ENCODE measurements at regions of chr13 and their contacts with region 1.

Region 1: DNA sequence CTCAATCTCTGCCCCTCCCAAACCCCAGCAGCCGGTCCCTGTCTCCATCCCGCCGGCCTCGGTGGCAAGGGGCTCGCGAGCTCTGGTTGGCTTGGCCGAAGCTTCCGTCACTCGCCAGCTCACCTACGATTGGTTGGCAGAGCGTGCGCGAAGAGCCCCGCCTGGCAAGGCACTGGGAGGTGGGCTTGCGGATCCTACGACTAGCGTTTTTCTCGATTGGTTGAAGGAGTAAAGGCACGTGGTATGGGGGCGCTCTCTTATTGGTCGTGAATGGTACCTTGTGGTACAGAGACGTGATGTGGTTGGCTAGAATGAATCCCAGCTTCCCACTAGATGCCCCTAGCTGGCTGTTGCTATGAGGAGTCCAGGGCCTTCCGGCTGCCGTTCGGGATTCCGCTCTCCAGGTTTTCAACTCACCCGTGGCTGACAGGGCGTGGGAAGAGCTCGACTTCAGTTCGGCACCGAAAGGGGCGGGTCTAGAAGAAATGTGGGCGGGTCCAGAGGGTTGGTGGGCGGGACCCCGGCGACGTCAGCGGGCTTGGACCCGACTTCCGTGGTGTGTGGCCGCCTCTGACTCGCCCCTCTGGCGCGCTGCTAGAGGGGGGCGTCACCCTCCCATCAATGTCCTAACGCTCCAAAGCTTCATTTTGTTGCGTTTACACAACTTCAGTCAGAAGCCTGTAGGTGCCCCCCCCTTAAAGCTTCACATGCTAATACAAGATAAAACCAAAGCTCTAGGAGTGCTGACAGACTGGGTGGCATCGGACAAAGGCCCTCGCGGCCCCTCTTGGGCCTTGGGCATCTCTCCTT is 847 bp upstream of the RAP2A start:
- DNase-seq: peak; percentile 99 to 100
- ATAC-seq: peak; percentile 72 to 87 (median 76)
- H3K4me3 ChIP-seq: peak overlapping the region; percentile 91
- H3K4me3 Mint-ChIP-seq: peak overlapping the region; percentile 99
- H3K27ac ChIP-seq: peak overlapping the region; percentile 98
- H3K27ac Mint-ChIP-seq: peak overlapping the region; percentile 91 to 98
- H3K4me1 ChIP-seq: no peaks in the 10 kb centered on the region
- H3K4me1 Mint-ChIP-seq: peaks cover 36% of the 10 kb centered on the region in 2 donors
- H3K27me3 ChIP-seq: no peaks in the 10 kb centered on the region
- H3K27me3 Mint-ChIP-seq: peaks cover 0 to 10% of the 10 kb centered on the region in 2 donors
- CTCF ChIP-seq: no peak

Region 2: GRCh38 chr13:97367016-97367822 is 65.9 kb before region 1 on chr13:
- intact Hi-C with region 1: loop called (anchors 5 kb)
- DNase-seq: no peak
- ATAC-seq: peak; percentile 32 to 55 (median 48)
- H3K4me3 ChIP-seq: no peak overlapping the region
- H3K4me3 Mint-ChIP-seq: peak overlapping the region; percentile 25
- H3K27ac ChIP-seq: no peak overlapping the region
- H3K27ac Mint-ChIP-seq: peak overlapping the region; percentile 83 to 95
- H3K4me1 ChIP-seq: peaks cover 8% of the 10 kb centered on the region
- H3K4me1 Mint-ChIP-seq: peaks cover 27 to 29% of the 10 kb centered on the region in 2 donors
- H3K27me3 ChIP-seq: no peaks in the 10 kb centered on the region
- H3K27me3 Mint-ChIP-seq: no peaks in the 10 kb centered on the region
- CTCF ChIP-seq: no peak

Region 3: GRCh38 chr13:97422118-97423054 is 10.7 kb before region 1 on chr13:
- intact Hi-C with region 1: no loop called
- DNase-seq: no peak
- ATAC-seq: no peak
- H3K4me3 ChIP-seq: no peak overlapping the region
- H3K4me3 Mint-ChIP-seq: no peak overlapping the region
- H3K27ac ChIP-seq: no peak overlapping the region
- H3K27ac Mint-ChIP-seq: no peak overlapping the region
- H3K4me1 ChIP-seq: no peaks in the 10 kb centered on the region
- H3K4me1 Mint-ChIP-seq: no peaks in the 10 kb centered on the region
- H3K27me3 ChIP-seq: no peaks in the 10 kb centered on the region
- H3K27me3 Mint-ChIP-seq: peaks cover 15 to 50% of the 10 kb centered on the region in 2 donors
- CTCF ChIP-seq: no peak

Region 4: DNA sequence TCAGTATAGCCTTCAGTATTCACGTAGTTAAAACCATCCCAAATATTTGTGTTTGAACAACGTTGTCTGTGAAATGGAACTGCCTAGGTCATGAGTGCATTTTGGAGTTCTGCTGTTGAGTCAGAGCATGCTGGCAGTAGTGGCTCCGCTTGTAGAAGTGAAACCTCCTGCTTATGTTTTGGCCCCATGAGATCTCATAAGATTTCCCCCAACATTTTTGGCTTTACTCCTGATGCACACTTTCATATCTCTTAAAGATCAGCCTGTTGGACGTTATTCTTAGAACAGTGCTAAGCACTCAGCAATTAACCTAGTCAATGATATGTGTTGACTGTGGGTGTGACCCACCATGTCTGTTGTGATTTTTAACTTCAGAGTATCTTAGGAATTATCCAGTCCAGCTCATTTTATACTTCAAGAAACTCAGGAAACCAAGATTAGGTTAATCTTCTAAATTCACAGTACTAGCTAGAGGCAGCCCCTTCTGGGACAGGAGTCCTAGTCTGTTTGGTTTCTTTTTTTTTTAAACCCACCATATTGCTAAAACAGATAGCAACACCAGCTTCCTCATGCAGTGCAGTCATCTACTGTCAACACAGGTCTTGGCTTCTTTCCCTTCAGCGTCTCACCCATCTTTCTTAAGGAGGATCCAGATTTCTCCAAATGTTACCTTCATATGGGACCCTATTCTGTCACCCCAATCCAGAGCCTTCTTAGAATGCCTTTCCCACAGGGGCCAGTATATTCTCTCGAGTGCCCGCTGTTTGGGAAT is 27.1 kb after region 1 on chr13:
- intact Hi-C with region 1: no loop called
- DNase-seq: no peak
- ATAC-seq: no peak
- H3K4me3 ChIP-seq: no peak overlapping the region
- H3K4me3 Mint-ChIP-seq: no peak overlapping the region
- H3K27ac ChIP-seq: peak overlapping the region; percentile 18
- H3K27ac Mint-ChIP-seq: peak overlapping the region in 1 of 2 donors; percentile 50
- H3K4me1 ChIP-seq: peaks cover 8% of the 10 kb centered on the region
- H3K4me1 Mint-ChIP-seq: peaks cover 33 to 35% of the 10 kb centered on the region in 2 donors
- H3K27me3 ChIP-seq: no peaks in the 10 kb centered on the region
- H3K27me3 Mint-ChIP-seq: no peaks in the 10 kb centered on the region
- CTCF ChIP-seq: no peak